Sigmoid colon (tissue), 7 donors: ENCODE measurements at regions of chr9 and their contacts with region 1.

Region 1: GRCh38 chr9:130327070-130327780 is 61.7 kb downstream of the HMCN2 start:
- DNase-seq: no peak
- H3K4me3 ChIP-seq: no peak overlapping the region
- H3K27ac ChIP-seq: peak overlapping the region; percentile 86 to 99 (median 92)
- H3K4me1 ChIP-seq: peaks cover 0 to 84% (median 70%) of the 10 kb centered on the region in 4 donors
- H3K27me3 ChIP-seq: no peaks in the 10 kb centered on the region
- CTCF ChIP-seq: peak in 2 of 4 experiments; percentile 31 to 47
- EP300 ChIP-seq: no peak
- POLR2A ChIP-seq: no peak

Region 2: GRCh38 chr9:130183133-130183762 is 144.0 kb before region 1 on chr9:
- intact Hi-C with region 1: loop called (anchors 5 kb)
- DNase-seq: no peak
- H3K4me3 ChIP-seq: peak overlapping the region in 2 of 4 donors; percentile 9 to 10
- H3K27ac ChIP-seq: peak overlapping the region; percentile 94 to 99 (median 96)
- H3K4me1 ChIP-seq: peaks cover 0 to 96% (median 87%) of the 10 kb centered on the region in 4 donors
- H3K27me3 ChIP-seq: no peaks in the 10 kb centered on the region
- CTCF ChIP-seq: no peak
- EP300 ChIP-seq: no peak
- POLR2A ChIP-seq: no peak

Region 3: DNA sequence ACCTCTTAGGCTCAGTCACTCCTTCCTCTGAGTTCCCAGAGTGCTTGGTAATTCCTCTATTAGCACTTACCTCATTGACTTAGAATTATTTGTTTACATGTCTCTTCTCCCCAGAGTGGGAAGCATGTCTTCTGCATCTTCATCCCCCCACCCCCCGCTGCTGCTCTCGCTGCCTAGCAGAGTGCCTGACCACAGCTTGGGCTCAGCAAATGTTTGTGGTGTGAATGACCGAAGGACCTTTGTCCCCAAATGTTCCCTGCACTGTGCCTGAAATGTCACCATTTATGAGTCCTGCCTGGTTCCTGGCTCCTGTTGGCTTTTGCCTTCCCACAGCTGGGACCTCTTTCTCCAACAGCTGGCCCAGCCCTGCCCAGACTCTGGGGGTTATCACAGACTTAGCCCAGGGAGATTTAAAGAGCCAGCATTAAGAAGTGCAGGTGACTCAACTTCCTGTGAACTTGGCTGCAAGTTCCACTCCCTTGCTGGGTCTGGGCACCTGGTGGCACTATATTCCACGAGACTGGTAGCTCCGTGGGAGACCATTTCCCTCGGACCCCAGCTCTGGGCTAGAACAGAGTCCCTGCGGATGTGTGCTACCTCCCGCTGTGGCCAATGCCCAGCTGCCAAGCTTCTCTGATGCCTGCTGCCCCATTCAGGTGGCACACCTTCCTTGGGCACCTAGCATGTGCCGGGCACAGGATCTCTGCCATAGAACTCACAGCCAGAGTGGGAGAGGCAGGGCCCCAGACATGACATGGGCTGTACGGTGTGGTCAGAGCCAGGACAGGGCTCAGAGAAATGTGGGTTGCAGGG is 63.4 kb before region 1 on chr9:
- intact Hi-C with region 1: loop called (anchors 5 kb)
- DNase-seq: peak; percentile 63
- H3K4me3 ChIP-seq: no peak overlapping the region
- H3K27ac ChIP-seq: peak overlapping the region; percentile 2 to 98 (median 88)
- H3K4me1 ChIP-seq: peaks cover 0 to 83% (median 62%) of the 10 kb centered on the region in 4 donors
- H3K27me3 ChIP-seq: no peaks in the 10 kb centered on the region
- CTCF ChIP-seq: no peak
- EP300 ChIP-seq: no peak
- POLR2A ChIP-seq: no peak

Region 4: DNA sequence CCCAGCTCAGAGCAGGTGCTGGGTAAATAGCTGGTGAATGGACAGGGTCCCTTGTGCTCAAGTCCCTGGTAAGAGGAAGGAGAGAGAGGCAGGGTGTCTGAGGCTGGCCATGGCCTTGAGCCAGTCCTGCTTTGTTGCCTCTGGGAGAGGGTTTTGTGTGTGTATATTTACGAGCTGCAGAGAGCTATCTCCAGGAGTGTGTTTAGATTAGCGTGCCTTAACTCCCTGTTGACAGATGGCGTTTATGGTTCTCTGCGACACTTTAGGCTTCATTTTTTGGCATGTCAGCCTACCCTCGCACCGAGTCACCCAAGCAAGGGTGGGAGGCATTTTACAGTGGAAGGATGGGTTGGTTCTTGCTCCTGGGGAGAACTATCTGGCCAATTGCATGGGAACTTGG is 39.5 kb before region 1 on chr9:
- intact Hi-C with region 1: loop called (anchors 5 kb)
- DNase-seq: no peak
- H3K4me3 ChIP-seq: no peak overlapping the region
- H3K27ac ChIP-seq: peak overlapping the region in 3 of 4 donors; percentile 56 to 95 (median 91)
- H3K4me1 ChIP-seq: peaks cover 0 to 92% (median 73%) of the 10 kb centered on the region in 4 donors
- H3K27me3 ChIP-seq: no peaks in the 10 kb centered on the region
- CTCF ChIP-seq: no peak
- EP300 ChIP-seq: no peak
- POLR2A ChIP-seq: no peak

Region 5: DNA sequence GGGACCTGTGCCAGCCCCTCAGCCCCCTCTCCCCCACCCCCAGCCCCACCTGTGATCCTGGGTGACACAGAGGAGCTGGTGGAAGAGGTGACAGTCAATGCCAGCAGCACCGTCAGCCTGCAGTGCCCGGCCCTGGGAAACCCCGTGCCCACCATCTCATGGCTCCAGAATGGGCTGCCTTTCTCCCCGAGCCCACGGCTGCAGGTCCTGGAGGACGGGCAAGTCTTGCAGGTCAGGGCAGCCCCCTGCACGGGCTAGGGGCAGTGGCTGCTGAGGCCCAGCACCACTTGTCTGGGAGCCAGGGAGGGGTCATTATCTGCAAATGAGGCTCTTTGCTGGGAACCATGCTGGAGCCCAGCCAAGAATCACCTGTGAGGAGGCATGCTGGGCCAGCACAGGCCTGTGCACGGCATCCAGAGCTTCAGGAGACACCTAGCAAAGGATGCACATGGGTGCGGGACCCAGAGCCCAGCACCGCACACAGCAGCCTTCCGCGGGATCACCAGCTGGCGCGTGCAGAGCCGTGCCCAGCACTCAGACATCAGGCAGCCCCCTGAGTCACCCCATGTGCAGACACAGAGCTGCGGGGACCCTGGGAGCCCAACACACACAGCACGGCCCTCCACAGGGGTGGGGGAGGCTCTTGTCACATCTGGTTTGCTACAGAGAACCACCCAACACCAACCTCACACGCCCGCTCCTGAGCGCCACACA is 55.6 kb after region 1 on chr9:
- intact Hi-C with region 1: no loop called
- DNase-seq: no peak
- H3K4me3 ChIP-seq: no peak overlapping the region
- H3K27ac ChIP-seq: no peak overlapping the region
- H3K4me1 ChIP-seq: no peaks in the 10 kb centered on the region
- H3K27me3 ChIP-seq: no peaks in the 10 kb centered on the region
- CTCF ChIP-seq: no peak
- EP300 ChIP-seq: no peak
- POLR2A ChIP-seq: no peak

Region 6: GRCh38 chr9:130741831-130742449 is 414.7 kb after region 1 on chr9:
- intact Hi-C with region 1: no loop called
- DNase-seq: no peak
- H3K4me3 ChIP-seq: no peak overlapping the region
- H3K27ac ChIP-seq: no peak overlapping the region
- H3K4me1 ChIP-seq: no peaks in the 10 kb centered on the region
- H3K27me3 ChIP-seq: no peaks in the 10 kb centered on the region
- CTCF ChIP-seq: no peak
- EP300 ChIP-seq: no peak
- POLR2A ChIP-seq: no peak